ENCODE measurements at regions of chr1 and their contacts with region 1.

Region 1: GRCh38 chr1:203625628-203626019 is 1.0 kb upstream of the ATP2B4 start:
- DNase-seq: peak; percentile 53 to 66
- H3K4me3 ChIP-seq: no peak overlapping the region
- H3K4me3 Mint-ChIP-seq: peak overlapping the region; percentile 82
- H3K27ac Mint-ChIP-seq: peak overlapping the region; percentile 89
- H3K4me1 ChIP-seq: peaks cover 39% of the 10 kb centered on the region
- H3K4me1 Mint-ChIP-seq: peaks cover 45% of the 10 kb centered on the region
- H3K27me3 ChIP-seq: no peaks in the 10 kb centered on the region
- H3K27me3 Mint-ChIP-seq: no peaks in the 10 kb centered on the region
- CTCF ChIP-seq: peak in 1 of 2 experiments; percentile 15

Region 2: DNA sequence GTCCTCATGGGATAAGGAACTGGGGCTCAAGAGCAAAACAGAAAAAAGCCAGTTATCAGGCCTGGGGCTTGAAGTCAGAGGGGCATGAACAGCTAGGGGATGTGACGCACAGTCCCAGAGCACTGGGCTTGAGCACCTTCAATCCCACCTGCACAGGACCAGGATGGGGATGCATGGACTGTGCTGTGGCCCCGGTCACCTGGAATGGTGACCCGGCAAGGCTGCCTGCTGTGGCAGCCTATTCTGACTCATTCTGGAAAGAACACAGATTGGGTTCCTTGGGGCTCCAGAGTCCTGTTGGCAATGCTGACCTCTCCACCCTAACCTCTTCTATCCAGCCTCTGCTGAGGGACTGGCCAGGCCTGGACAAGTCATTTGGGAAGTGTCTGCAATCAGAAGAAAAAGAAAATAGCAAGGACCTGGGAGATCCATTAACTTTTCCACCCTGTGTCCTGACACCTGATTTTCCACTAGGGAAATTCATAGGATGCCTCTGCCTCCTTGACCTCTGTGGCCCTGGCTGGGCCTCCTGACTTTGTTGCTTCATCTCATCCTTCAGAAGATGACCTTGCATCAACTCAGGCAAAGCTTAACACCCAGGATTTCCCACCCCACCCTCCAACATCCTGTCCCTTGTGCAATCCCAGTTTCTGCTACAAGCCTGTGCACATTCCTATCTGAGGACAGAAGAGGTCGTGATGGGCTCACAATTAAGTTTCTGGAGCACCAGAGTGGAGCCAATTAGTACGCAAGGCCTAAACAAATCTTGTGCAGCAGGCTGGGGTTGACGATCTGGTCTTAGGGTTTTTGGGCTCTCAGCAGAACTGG is 256.8 kb before region 1 on chr1:
- CTCF ChIA-PET with region 1: no interaction called
- POLR2A ChIA-PET with region 1: no interaction called
- intact Hi-C with region 1: no loop called
- DNase-seq: peak; percentile 34 to 52
- H3K4me3 ChIP-seq: no peak overlapping the region
- H3K4me3 Mint-ChIP-seq: no peak overlapping the region
- H3K27ac Mint-ChIP-seq: no peak overlapping the region
- H3K4me1 ChIP-seq: peaks cover 5% of the 10 kb centered on the region; the same call in 1 of the 2 replicates
- H3K4me1 Mint-ChIP-seq: peaks cover 7% of the 10 kb centered on the region
- H3K27me3 ChIP-seq: no peaks in the 10 kb centered on the region
- H3K27me3 Mint-ChIP-seq: no peaks in the 10 kb centered on the region
- CTCF ChIP-seq: peak in 1 of 2 experiments; percentile 18

Region 3: DNA sequence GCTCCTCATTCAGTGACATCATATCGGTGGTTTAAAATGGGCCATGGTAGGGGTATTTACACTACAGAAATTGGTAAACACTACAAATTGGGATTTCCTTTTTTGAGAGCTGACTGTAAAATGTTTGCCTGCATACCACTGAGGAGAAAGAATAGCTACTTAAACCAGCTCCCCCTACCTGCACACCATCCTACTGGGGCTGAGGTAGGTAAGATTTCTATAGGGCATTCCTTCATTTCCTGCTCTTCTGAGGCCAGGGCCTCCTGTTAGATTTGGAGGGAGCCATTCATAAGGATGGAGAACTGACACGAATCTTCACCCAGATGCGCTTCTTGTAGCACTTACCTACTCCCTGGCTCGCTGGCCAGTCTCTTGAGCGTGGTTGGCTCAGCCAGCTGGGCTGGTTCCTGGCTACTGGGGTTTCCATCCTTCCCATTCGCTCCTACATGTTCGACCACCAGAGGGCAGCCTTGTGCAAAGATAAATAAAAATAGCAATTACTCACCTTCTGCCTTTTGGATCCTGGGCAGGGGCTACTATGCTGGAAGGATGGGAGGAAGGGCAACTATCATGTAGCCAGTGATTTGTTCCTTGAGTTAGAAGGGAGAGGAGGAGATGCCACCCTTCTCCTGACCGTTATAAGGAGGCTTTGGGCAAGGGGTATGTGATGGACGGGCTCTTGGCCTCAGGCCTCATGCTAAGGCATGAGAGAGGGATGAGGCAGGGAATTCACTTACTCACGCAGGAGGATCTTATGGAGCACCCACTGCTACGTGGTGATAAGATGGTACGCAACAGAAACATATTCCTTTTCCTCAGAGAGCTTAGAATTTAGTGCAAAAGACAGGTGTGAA is 121.0 kb before region 1 on chr1:
- CTCF ChIA-PET with region 1: interaction called, 3 read pairs
- POLR2A ChIA-PET with region 1: no interaction called
- intact Hi-C with region 1: loop called (anchors 5 kb)
- DNase-seq: peak; percentile 77 to 87
- H3K4me3 ChIP-seq: no peak overlapping the region
- H3K4me3 Mint-ChIP-seq: no peak overlapping the region
- H3K27ac Mint-ChIP-seq: no peak overlapping the region
- H3K4me1 ChIP-seq: peaks cover 9% of the 10 kb centered on the region; the same call in 1 of the 2 replicates
- H3K4me1 Mint-ChIP-seq: peaks cover 10% of the 10 kb centered on the region
- H3K27me3 ChIP-seq: no peaks in the 10 kb centered on the region
- H3K27me3 Mint-ChIP-seq: peaks cover 9% of the 10 kb centered on the region
- CTCF ChIP-seq: peak; percentile 68 to 77

Region 4: DNA sequence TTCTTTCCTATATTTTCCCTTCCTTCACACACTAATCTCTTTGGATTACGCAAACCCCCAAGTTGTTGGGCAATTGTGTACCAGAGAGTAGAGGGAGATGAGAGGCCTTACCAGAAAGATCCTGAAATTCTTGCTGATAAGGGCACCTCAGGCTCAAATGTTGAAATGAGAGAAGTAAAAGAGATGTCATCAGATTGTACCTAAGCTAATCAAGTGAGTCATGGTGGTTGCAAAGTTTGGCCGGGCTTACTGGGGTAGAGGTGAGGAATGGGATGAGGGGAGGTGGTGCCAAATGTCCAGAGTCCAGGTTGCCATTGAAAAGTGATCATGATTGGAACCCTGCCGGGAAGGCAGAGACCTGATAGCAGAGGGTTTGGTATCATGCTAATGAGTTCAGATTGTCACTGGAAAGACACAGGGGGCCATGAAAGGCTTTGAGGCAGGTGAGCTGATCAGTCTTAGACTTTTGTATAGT is 88.6 kb before region 1 on chr1:
- CTCF ChIA-PET with region 1: no interaction called
- POLR2A ChIA-PET with region 1: interaction called, 4 read pairs
- intact Hi-C with region 1: loop called (anchors 1 kb)
- DNase-seq: peak; percentile 86 to 89
- H3K4me3 ChIP-seq: no peak overlapping the region
- H3K4me3 Mint-ChIP-seq: peak overlapping the region; percentile 49
- H3K27ac Mint-ChIP-seq: peak overlapping the region; percentile 92
- H3K4me1 ChIP-seq: peaks cover 34% of the 10 kb centered on the region
- H3K4me1 Mint-ChIP-seq: peaks cover 23% of the 10 kb centered on the region
- H3K27me3 ChIP-seq: no peaks in the 10 kb centered on the region
- H3K27me3 Mint-ChIP-seq: no peaks in the 10 kb centered on the region
- CTCF ChIP-seq: no peak

Region 5: GRCh38 chr1:203673550-203674427 is 48.2 kb after region 1 on chr1:
- CTCF ChIA-PET with region 1: no interaction called
- POLR2A ChIA-PET with region 1: no interaction called
- intact Hi-C with region 1: loop called (anchors 1 kb)
- DNase-seq: peak; percentile 47 to 61
- H3K4me3 ChIP-seq: no peak overlapping the region
- H3K4me3 Mint-ChIP-seq: no peak overlapping the region
- H3K27ac Mint-ChIP-seq: peak overlapping the region; percentile 55
- H3K4me1 ChIP-seq: peaks cover 10% of the 10 kb centered on the region
- H3K4me1 Mint-ChIP-seq: peaks cover 8% of the 10 kb centered on the region
- H3K27me3 ChIP-seq: no peaks in the 10 kb centered on the region
- H3K27me3 Mint-ChIP-seq: no peaks in the 10 kb centered on the region
- CTCF ChIP-seq: peak in 1 of 2 experiments; percentile 26

Measured in Caco-2 (cell line).